Ovary (tissue), 10 donors: ENCODE measurements at regions of chr22 and their contacts with region 1.

Region 1: DNA sequence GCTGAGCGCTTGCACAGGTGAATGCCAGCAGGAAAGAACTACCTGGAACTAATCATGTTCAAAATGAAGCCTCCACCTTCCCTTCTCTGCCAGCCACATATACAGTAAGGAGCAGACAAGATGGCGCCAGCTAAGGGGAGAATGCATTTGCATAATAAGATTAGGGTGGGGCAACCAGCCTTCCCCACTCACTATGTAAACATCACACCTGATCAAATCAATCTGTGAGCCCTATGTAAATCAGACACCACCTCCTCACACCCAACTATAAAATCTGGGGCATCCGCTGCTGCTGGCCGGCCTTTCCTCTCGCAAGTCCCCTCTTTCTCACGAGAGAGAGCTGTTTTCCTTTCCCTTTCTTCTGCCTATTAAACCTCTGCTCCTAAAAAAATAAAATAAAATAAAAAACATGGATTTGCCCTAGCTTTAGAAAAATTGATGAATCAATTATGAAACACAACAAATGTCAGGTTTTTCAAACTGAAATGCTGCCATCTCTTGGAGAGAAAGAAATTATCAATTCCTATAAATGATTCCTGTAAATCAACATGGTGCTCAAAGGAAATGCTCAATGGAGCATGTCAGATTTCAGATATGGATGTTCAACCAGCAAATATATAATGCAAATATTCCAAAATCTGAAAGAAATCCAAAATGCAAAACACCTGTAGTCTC is 108.9 kb downstream of the SGSM3 start:
- DNase-seq: no peak
- H3K4me3 ChIP-seq: no peak overlapping the region
- H3K27ac ChIP-seq: no peak overlapping the region
- H3K4me1 ChIP-seq: peaks cover 6% of the 10 kb centered on the region
- H3K27me3 ChIP-seq: no peaks in the 10 kb centered on the region
- CTCF ChIP-seq: no peak
- EP300 ChIP-seq: no peak
- POLR2A ChIP-seq: no peak

Region 2: DNA sequence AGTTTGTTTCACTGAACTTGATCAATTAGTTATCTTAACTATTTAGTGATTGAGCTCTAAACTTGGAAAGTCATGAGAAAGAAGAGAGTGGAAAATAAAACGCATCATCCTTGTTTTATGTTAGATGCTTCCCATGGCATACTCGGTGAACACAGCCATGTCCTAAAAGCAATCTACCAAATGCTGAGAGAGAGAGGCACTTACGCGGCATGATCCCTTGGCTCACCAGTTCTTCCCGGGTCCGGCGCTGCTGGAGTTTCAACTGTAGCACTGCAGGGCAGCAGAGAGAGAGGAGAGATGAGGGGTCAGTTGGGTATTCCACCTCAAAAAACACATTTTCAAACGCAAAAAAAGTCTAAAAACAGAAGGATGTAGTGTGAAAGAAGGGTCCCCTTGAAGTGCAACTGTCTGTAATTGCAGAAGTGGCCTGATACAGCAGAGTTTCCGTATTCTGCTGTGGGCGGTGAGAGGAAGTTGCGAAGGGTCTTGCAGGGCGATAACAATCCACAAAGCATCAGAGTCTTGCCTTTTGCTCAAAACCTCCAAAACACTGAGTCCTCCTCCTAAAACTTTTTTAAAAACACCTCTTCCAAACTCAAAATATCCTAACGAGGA is 16.1 kb before region 1 on chr22:
- intact Hi-C with region 1: loop called in 1 of 4 experiments (anchors 2 kb)
- DNase-seq: no peak
- H3K4me3 ChIP-seq: no peak overlapping the region
- H3K27ac ChIP-seq: no peak overlapping the region
- H3K4me1 ChIP-seq: peaks cover 2% of the 10 kb centered on the region
- H3K27me3 ChIP-seq: no peaks in the 10 kb centered on the region
- CTCF ChIP-seq: no peak
- EP300 ChIP-seq: no peak
- POLR2A ChIP-seq: no peak